ENCODE measurements at regions of chr14 and their contacts with region 1.

Region 1: GRCh38 chr14:64503478-64504309 is at the start of gene ZBTB25:
- DNase-seq: peak; percentile 78 to 88
- H3K4me3 ChIP-seq: peak within 1 kb of the TSS; percentile 68 to 93 (median 78)
- H3K27ac ChIP-seq: peak within 1 kb of the TSS; percentile 96
- H3K4me1 ChIP-seq: peaks cover 2 to 14% (median 9%) of the 10 kb centered on the region in 4 experiments; a peak in 5 of 7 replicates
- H3K27me3 ChIP-seq: no peaks in the 10 kb centered on the region
- CTCF ChIP-seq: no peak
- EP300 ChIP-seq: no peak
- POLR2A ChIP-seq: peak; percentile 15 to 62; a peak in 2 of 3 replicates
- RAD21 ChIP-seq: no peak
- total RNA-seq, gene ZBTB25: 11.4 and 11.5 TPM in 2 replicates

Region 2: DNA sequence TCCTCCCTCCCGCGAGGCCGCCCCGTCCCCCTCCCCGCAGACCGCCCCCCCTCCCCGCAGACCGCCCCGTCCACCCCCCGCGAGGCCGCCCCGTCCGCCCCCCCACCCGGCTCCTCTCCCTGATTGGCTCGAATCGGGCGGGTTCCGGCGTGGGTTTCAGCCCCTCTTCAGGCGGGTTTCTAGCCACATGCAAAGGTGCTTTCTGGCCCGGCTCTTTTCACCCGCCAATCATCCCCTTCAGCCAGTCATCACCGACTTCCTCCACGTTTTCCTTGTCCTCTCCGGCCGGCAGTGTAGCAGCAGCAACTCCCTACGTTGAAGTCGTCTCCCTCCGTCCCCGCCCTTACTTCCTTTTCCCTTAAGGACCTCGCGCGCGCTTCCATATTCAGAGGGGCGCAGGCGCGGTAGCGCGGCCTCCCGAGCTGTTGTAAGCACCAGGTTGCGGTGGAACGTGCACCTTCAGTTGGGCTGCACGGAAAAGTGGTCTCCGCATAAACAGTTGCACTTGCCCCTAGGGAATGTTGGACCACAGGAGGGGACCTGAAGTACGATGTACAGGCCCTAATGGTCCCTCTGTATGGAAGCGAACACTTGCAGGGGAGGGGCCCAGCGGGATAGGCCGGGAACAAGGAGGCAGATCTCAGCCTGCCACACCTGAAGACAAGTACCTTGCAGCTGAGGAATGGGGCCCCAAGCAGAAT is 164.9 kb before region 1 on chr14:
- CTCF ChIA-PET with region 1: interaction called, 6 read pairs
- POLR2A ChIA-PET with region 1: interaction called, 11 read pairs
- DNase-seq: peak; percentile 92 to 96
- H3K4me3 ChIP-seq: peak overlapping the region; percentile 74 to 93 (median 81)
- H3K27ac ChIP-seq: peak overlapping the region; percentile 88
- H3K4me1 ChIP-seq: peaks cover 6 to 14% (median 9%) of the 10 kb centered on the region in 4 experiments; a peak in 6 of 7 replicates
- H3K27me3 ChIP-seq: no peaks in the 10 kb centered on the region
- CTCF ChIP-seq: no peak
- EP300 ChIP-seq: no peak
- POLR2A ChIP-seq: peak; percentile 44 to 85
- RAD21 ChIP-seq: no peak

Region 3: DNA sequence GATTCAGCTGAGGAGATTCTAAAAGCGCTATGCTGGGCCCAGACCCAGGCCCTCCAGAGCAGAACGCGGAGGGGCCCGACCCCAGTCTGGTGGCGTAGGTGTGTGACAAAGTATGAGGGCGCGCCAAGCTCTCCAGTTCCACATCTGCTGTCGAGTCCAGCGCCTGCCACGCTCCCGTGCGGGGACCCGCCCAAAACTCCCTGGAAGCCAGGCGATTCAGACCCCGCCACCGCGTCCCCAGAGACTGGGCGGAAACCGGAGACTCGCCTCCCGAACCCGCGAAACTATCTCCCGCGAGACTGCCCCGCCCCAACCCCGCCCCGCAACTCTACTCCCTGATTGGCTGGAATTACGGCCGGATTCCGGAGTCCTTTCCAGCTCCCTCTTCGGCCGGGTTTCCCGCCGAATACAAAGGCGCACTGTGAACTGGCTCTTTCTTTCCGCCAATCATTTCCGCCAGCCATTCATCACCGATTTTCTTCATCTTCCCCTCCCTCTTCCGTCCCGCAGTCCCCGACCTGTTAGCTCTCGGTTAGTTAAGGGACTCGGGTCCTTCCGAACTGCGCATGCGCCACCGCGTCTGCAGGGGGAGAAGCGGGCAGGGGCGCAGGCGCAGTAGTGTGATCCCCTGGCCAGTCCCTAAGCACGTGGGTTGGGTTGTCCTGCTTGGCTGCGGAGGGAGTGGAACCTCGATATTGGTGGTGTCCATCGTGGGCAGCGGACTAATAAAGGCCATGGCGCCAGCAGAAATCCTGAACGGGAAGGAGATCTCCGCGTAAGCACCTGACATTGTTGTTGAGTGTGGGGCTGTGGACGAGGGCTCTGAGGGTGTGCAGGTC is 115.8 kb before region 1 on chr14 and contains the start of gene MTHFD1:
- CTCF ChIA-PET with region 1: no interaction called
- POLR2A ChIA-PET with region 1: interaction called, 23 read pairs
- DNase-seq: peak; percentile 98
- H3K4me3 ChIP-seq: peak within 1 kb of the TSS; percentile 67 to 90 (median 76)
- H3K27ac ChIP-seq: peak within 1 kb of the TSS; percentile 92
- H3K4me1 ChIP-seq: peaks cover 5 to 11% (median 10%) of the 10 kb centered on the region in 4 experiments
- H3K27me3 ChIP-seq: no peaks in the 10 kb centered on the region
- CTCF ChIP-seq: no peak
- EP300 ChIP-seq: no peak
- POLR2A ChIP-seq: peak; percentile 82 to 89; a peak in 2 of 3 replicates
- RAD21 ChIP-seq: no peak
- total RNA-seq, gene MTHFD1: 302 and 332 TPM in 2 replicates

Region 4: GRCh38 chr14:64465191-64465822 is 38.4 kb before region 1 on chr14 and contains the start of gene AKAP5:
- CTCF ChIA-PET with region 1: interaction called, 4 read pairs
- POLR2A ChIA-PET with region 1: interaction called, 52 read pairs
- DNase-seq: peak; percentile 50 to 91
- H3K4me3 ChIP-seq: peak within 1 kb of the TSS; percentile 51 to 70 (median 63)
- H3K27ac ChIP-seq: no peak within 1 kb of the TSS
- H3K4me1 ChIP-seq: peaks cover 0 to 6% (median 4%) of the 10 kb centered on the region in 4 experiments; a peak in 4 of 7 replicates
- H3K27me3 ChIP-seq: no peaks in the 10 kb centered on the region
- CTCF ChIP-seq: 0 out of 4 replicates have a peak, but pooled peaks of 1 of the 3 experiments have one; percentile 15
- EP300 ChIP-seq: no peak
- POLR2A ChIP-seq: peak; percentile 21 to 38; a peak in 2 of 3 replicates
- RAD21 ChIP-seq: 0 out of 4 replicates have a peak, but pooled peaks of 1 of the 2 experiments have one; percentile 8
- total RNA-seq, gene AKAP5: 3.5 and 3.8 TPM in 2 replicates

Region 5: DNA sequence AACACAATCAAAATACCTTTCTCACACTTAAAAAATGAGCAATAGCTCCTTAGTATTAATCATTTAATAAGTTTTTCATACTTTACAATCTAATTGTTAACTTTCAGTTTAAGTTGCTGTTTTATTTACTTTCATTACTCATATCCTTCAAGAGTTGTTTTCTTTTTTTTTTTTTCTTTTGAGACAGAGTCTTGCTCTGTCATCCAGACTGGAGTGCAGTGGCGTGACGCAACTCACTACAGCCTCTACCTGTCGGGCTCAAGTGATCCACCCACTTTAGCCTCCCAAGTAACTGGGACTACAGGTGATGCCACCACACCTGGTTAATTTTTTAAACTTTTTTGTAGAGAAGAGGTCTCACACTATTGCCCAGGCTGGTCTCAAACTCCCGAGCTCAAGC is 17.0 kb after region 1 on chr14:
- CTCF ChIA-PET with region 1: interaction called, 3 read pairs
- POLR2A ChIA-PET with region 1: interaction called, 19 read pairs
- DNase-seq: no peak
- H3K4me3 ChIP-seq: no peak overlapping the region
- H3K27ac ChIP-seq: no peak overlapping the region
- H3K4me1 ChIP-seq: no peaks in the 10 kb centered on the region
- H3K27me3 ChIP-seq: no peaks in the 10 kb centered on the region
- CTCF ChIP-seq: no peak
- EP300 ChIP-seq: no peak
- POLR2A ChIP-seq: no peak
- RAD21 ChIP-seq: no peak

Region 6: DNA sequence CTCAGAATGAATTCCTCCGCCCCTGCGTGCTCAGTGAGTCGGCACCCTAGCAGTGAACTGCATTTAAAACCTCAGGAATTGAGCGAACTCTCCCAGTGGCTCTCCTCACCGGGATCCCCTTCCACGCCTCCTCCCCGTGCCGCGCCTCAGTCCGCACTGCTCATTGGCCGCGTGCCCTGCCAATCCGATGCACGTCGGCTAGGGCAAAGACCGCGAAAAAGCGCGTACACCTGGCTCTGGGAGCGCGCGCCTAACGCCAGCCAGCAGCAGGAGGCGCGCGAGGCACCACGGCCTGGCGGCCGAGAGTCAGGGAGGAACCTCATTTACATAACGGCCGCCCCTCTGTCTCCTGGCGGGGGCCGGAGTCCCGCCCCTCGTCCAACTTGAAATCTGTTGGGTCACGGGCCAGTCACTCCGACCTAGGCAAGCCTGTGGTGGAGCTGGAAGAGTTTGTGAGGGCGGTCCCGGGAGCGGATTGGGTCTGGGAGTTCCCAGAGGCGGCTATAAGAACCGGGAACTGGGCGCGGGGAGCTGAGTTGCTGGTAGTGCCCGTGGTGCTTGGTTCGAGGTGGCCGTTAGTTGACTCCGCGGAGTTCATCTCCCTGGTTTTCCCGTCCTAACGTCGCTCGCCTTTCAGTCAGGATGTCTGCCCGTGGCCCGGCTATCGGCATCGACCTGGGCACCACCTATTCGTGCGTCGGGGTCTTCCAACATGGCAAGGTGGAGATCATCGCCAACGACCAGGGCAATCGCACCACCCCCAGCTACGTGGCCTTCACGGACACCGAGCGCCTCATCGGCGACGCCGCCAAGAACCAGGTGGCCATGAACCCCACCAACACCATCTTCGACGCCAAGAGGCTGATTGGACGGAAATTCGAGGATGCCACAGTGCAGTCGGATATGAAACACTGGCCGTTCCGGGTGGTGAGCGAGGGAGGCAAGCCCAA is 36.8 kb after region 1 on chr14 and contains the start of gene HSPA2:
- CTCF ChIA-PET with region 1: no interaction called
- POLR2A ChIA-PET with region 1: interaction called, 21 read pairs
- DNase-seq: peak; percentile 98 to 99
- H3K4me3 ChIP-seq: peak within 1 kb of the TSS; percentile 47 to 75 (median 58)
- H3K27ac ChIP-seq: peak within 1 kb of the TSS; percentile 90
- H3K4me1 ChIP-seq: peaks cover 0 to 21% (median 3%) of the 10 kb centered on the region in 4 experiments; a peak in 4 of 7 replicates
- H3K27me3 ChIP-seq: peaks cover 0 to 3% (median 0%) of the 10 kb centered on the region in 4 experiments; a peak in 1 of 7 replicates
- CTCF ChIP-seq: peak; percentile 73 to 85 (median 83)
- EP300 ChIP-seq: no peak
- POLR2A ChIP-seq: peak; percentile 79 to 97
- RAD21 ChIP-seq: peak; percentile 63 to 73
- total RNA-seq, gene HSPA2: 82.9 and 91.1 TPM in 2 replicates

Region 7: GRCh38 chr14:64594425-64594824 is 90.7 kb after region 1 on chr14:
- CTCF ChIA-PET with region 1: no interaction called
- POLR2A ChIA-PET with region 1: no interaction called
- DNase-seq: no peak
- H3K4me3 ChIP-seq: no peak overlapping the region
- H3K27ac ChIP-seq: no peak overlapping the region
- H3K4me1 ChIP-seq: no peaks in the 10 kb centered on the region; a peak in 1 of 7 replicates
- H3K27me3 ChIP-seq: no peaks in the 10 kb centered on the region
- CTCF ChIP-seq: no peak
- EP300 ChIP-seq: no peak
- POLR2A ChIP-seq: no peak
- RAD21 ChIP-seq: no peak

Region 8: DNA sequence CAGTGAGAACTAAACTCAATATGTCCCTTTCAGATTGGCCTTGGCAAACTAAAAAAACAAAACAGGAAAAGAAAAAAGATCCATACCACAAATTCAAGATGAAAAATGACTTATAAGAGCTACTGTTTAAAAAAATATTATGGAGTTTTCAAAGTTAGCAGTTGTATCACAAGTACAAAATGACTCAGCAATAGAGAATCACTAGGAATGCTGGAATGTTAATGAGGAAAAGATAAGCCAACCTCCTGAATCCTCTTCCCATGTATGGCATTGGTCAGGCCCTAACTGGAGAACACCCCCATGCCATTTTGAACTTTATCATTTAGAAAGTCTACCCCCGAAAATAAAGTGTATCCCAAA is 108.3 kb after region 1 on chr14:
- CTCF ChIA-PET with region 1: no interaction called
- POLR2A ChIA-PET with region 1: no interaction called
- DNase-seq: no peak
- H3K4me3 ChIP-seq: no peak overlapping the region
- H3K27ac ChIP-seq: no peak overlapping the region
- H3K4me1 ChIP-seq: peaks cover 0 to 2% (median 0%) of the 10 kb centered on the region in 4 experiments; a peak in 2 of 7 replicates
- H3K27me3 ChIP-seq: no peaks in the 10 kb centered on the region
- CTCF ChIP-seq: no peak
- EP300 ChIP-seq: no peak
- POLR2A ChIP-seq: no peak
- RAD21 ChIP-seq: no peak